ENCODE measurements at regions of chr11 and their contacts with region 1.

Region 1: GRCh38 chr11:24181395-24182047 is 315.3 kb upstream of the LUZP2 start:
- DNase-seq: no peak
- H3K4me3 ChIP-seq: no peak overlapping the region
- H3K27ac ChIP-seq: no peak overlapping the region
- H3K4me1 ChIP-seq: no peaks in the 10 kb centered on the region
- CTCF ChIP-seq: no peak

Region 2: DNA sequence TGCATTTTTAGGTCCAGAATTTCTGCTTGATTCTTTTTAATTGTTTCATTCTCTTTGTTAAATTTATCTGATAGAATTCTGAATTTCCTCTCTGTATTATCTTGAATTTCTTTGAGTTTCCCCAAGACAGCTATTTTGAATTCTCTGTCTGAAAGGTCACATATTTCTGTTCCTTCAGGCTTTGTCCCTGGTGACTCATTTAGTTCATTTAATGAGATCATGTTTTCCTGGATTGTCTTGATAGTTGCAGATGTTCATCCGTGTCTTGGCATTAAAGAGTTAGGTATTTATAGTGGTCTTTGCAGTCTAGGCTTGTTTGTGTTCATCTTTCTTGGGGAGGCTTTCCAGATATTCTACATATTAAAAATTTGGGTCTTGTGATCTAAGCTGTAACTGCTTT is 626.4 kb before region 1 on chr11:
- CTCF ChIA-PET with region 1: no interaction called
- POLR2A ChIA-PET with region 1: no interaction called
- intact Hi-C with region 1: loop called (anchors 5 kb)
- DNase-seq: no peak
- H3K4me3 ChIP-seq: no peak overlapping the region
- H3K27ac ChIP-seq: no peak overlapping the region
- H3K4me1 ChIP-seq: no peaks in the 10 kb centered on the region
- CTCF ChIP-seq: no peak

Measured in OCI-LY7 (cell line).